ENCODE measurements at regions of chr4 and their contacts with region 1.

Region 1: GRCh38 chr4:121227341-121227792 is 63.2 kb upstream of the TNIP3 start:
- DNase-seq: no peak
- ATAC-seq: peak; percentile 93
- H3K4me3 Mint-ChIP-seq: peak overlapping the region; percentile 58
- H3K27ac Mint-ChIP-seq: peak overlapping the region; percentile 83
- H3K4me1 Mint-ChIP-seq: peaks cover 43% of the 10 kb centered on the region
- H3K27me3 Mint-ChIP-seq: no peaks in the 10 kb centered on the region
- CTCF ChIP-seq: peak; percentile 63

Region 2: DNA sequence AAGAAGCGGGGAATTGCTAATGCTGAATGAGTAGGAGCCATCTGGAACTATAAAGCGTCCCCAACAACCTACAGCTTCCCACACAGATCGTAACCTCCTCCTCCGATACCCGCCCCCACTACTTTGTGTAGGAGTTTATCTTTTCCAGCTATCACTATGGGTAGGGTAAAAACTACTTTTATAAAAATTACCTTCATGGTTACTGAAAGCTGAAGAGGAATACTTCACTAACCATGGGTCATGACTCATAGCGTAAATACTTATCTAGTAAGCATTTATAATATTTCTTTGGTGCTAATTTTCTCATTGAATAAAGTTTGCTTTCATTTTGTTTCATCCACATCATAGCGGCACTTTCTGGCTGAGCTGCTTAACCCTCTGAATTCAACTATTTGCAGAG is 16.1 kb after region 1 on chr4:
- CTCF ChIA-PET with region 1: interaction called, 14 read pairs
- POLR2A ChIA-PET with region 1: interaction called, 3 read pairs
- intact Hi-C with region 1: no loop called
- DNase-seq: no peak
- ATAC-seq: peak; percentile 67
- H3K4me3 Mint-ChIP-seq: peak overlapping the region; percentile 8
- H3K27ac Mint-ChIP-seq: no peak overlapping the region
- H3K4me1 Mint-ChIP-seq: peaks cover 16% of the 10 kb centered on the region
- H3K27me3 Mint-ChIP-seq: no peaks in the 10 kb centered on the region
- CTCF ChIP-seq: no peak

Region 3: DNA sequence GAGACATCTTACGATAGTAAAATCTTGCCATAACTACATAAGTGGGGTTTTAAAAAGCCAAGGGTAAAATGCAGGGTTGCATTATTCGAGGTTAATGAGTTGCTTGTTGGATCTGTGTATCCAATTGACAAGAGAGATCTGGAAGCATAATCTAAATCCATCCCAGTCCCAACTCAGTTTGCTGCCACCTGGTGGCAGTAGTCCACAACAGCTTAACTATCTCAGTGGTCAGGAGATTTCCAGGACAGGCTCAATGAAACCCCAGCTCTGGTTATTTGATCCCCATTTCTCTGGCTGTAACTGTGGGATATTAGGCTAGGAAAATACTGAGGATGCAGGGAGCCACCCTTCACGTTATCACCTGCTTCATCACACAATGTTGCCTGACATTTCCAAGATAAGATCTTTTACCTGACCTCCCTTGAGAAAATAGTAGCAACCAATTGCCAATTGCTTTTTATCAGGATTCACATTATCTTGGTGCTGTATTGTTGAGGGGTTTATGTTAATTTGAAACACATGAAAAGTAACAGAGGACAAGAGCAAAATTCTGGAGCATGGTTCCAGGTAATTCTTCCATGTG is 24.9 kb after region 1 on chr4:
- CTCF ChIA-PET with region 1: interaction called, 14 read pairs
- POLR2A ChIA-PET with region 1: no interaction called
- intact Hi-C with region 1: no loop called
- DNase-seq: peak; percentile 75
- ATAC-seq: no peak
- H3K4me3 Mint-ChIP-seq: no peak overlapping the region
- H3K27ac Mint-ChIP-seq: no peak overlapping the region
- H3K4me1 Mint-ChIP-seq: peaks cover 57% of the 10 kb centered on the region
- H3K27me3 Mint-ChIP-seq: no peaks in the 10 kb centered on the region
- CTCF ChIP-seq: peak; percentile 87

Region 4: GRCh38 chr4:121380776-121381462 is 153.6 kb after region 1 on chr4 and contains the start of gene QRFPR:
- CTCF ChIA-PET with region 1: no interaction called
- POLR2A ChIA-PET with region 1: no interaction called
- intact Hi-C with region 1: no loop called
- DNase-seq: peak; percentile 2
- ATAC-seq: no peak
- H3K4me3 Mint-ChIP-seq: peak within 1 kb of the TSS; percentile 25
- H3K27ac Mint-ChIP-seq: no peak within 1 kb of the TSS
- H3K4me1 Mint-ChIP-seq: peaks cover 8% of the 10 kb centered on the region
- H3K27me3 Mint-ChIP-seq: peaks cover 59% of the 10 kb centered on the region
- CTCF ChIP-seq: no peak
- total RNA-seq, gene QRFPR: not detected

Region 5: GRCh38 chr4:121454251-121454979 is 227.0 kb after region 1 on chr4:
- CTCF ChIA-PET with region 1: no interaction called
- POLR2A ChIA-PET with region 1: no interaction called
- intact Hi-C with region 1: no loop called
- DNase-seq: no peak
- ATAC-seq: no peak
- H3K4me3 Mint-ChIP-seq: no peak overlapping the region
- H3K27ac Mint-ChIP-seq: no peak overlapping the region
- H3K4me1 Mint-ChIP-seq: no peaks in the 10 kb centered on the region
- H3K27me3 Mint-ChIP-seq: peaks cover 21% of the 10 kb centered on the region
- CTCF ChIP-seq: no peak